Dendritic cell treated with granulocyte-macrophage colony-stimulating factor and Interleukin-4, amounts not matched to agents 40 ng/mL and 50 ng/mL, for 4 days (primary cell): ENCODE measurements at regions of chr7 and their contacts with region 1.

Region 1: GRCh38 chr7:876167-876967 is at the start of gene GET4:
- H3K4me3 Mint-ChIP-seq: peak within 1 kb of the TSS; percentile 100
- H3K27ac Mint-ChIP-seq: peak within 1 kb of the TSS; percentile 99
- H3K4me1 Mint-ChIP-seq: peaks cover 36% of the 10 kb centered on the region
- H3K27me3 Mint-ChIP-seq: no peaks in the 10 kb centered on the region

Region 2: DNA sequence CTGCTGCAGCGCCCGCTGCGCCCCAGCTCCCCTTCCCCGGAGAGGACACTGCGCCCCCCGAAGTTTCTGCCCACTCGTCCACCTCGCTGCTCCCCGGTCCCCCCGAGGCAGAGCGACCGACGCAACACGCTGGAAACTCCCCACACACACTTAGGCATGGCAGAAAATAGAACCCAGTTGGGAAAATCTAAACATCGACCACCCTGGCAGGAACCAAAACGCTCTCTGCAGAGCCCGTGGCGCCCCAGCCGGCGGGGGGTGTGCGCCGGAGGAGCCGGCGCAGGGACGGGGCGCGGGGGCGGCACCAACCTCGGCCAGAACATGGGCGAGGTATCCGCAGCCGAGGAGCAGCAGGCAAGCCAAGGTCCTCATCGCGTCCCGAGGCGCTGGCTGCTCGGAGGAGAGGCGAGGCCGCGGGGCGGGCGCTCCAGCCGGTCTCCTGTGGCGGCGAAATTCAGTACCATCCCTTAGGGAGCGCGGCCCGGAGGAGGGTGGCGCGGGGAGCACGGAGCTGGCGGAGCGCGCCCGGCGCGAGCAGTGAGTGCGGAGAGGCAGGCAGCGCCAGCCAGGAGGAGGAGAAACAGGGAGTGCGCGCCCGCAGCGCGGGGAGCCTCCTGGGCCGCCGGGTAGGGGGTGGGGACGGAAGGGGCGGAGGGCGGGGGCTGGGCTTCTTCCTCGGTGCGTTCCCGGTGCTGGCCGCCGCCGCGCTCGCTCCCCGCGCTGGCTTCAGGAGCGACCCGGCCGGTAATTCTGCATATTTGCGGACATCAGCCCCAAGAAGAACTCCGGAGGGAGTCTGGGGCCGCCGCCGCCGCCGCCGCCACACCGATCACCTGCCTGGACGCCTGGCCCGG is 357.5 kb before region 1 on chr7:
- intact Hi-C with region 1: no loop called
- H3K4me3 Mint-ChIP-seq: peak overlapping the region; percentile 67
- H3K27ac Mint-ChIP-seq: no peak overlapping the region
- H3K4me1 Mint-ChIP-seq: peaks cover 31% of the 10 kb centered on the region
- H3K27me3 Mint-ChIP-seq: peaks cover 80% of the 10 kb centered on the region

Region 3: GRCh38 chr7:786472-787255 is 89.7 kb before region 1 on chr7:
- intact Hi-C with region 1: loop called (anchors 1 kb)
- H3K4me3 Mint-ChIP-seq: no peak overlapping the region
- H3K27ac Mint-ChIP-seq: no peak overlapping the region
- H3K4me1 Mint-ChIP-seq: no peaks in the 10 kb centered on the region
- H3K27me3 Mint-ChIP-seq: no peaks in the 10 kb centered on the region

Region 4: GRCh38 chr7:816300-816750 is 60.0 kb before region 1 on chr7:
- intact Hi-C with region 1: loop called (anchors 10 kb)
- H3K4me3 Mint-ChIP-seq: peak overlapping the region; percentile 69
- H3K27ac Mint-ChIP-seq: peak overlapping the region; percentile 63
- H3K4me1 Mint-ChIP-seq: peaks cover 74% of the 10 kb centered on the region
- H3K27me3 Mint-ChIP-seq: peaks cover 58% of the 10 kb centered on the region

Region 5: GRCh38 chr7:901381-902154 is 25.2 kb after region 1 on chr7:
- intact Hi-C with region 1: loop called (anchors 2 kb)
- H3K4me3 Mint-ChIP-seq: no peak overlapping the region
- H3K27ac Mint-ChIP-seq: peak overlapping the region; percentile 50
- H3K4me1 Mint-ChIP-seq: peaks cover 57% of the 10 kb centered on the region
- H3K27me3 Mint-ChIP-seq: no peaks in the 10 kb centered on the region

Region 6: GRCh38 chr7:1103009-1103788 is 226.8 kb after region 1 on chr7:
- intact Hi-C with region 1: no loop called
- H3K4me3 Mint-ChIP-seq: no peak overlapping the region
- H3K27ac Mint-ChIP-seq: no peak overlapping the region
- H3K4me1 Mint-ChIP-seq: no peaks in the 10 kb centered on the region
- H3K27me3 Mint-ChIP-seq: peaks cover 2% of the 10 kb centered on the region